ENCODE measurements at regions of chr7 and their contacts with region 1.

Region 1: DNA sequence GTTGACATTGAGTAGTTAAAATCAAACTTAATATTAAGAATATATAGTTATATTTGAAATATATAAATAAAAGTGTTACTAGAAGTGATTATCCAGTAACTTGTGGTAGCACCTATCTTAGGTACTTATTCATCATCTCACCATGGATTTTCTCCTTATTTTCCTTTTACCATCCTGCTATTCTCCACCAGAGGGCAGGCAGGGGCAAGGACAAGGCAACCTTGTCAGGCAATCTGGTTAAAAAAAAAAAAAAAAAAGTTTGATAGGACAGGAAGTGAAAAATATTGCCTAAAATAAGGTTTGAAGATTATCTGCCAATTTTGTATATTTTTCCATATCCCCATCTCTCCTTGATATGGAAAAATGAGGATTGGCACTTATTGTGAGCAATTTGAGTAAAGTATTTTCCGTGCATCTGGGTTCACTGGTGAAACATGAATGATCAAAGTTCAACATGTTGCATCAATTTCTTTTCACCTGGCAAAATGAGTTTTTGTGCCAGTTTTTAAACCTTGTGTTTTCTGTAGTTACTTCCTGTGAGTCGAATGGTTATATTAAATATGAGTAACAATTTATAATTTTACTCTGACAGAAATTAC is 256.7 kb downstream of the AGMO start:
- DNase-seq: peak; percentile 35
- ATAC-seq: no peak
- H3K4me3 Mint-ChIP-seq: no peak overlapping the region
- H3K27ac Mint-ChIP-seq: no peak overlapping the region
- H3K4me1 Mint-ChIP-seq: no peaks in the 10 kb centered on the region
- H3K27me3 Mint-ChIP-seq: no peaks in the 10 kb centered on the region
- CTCF ChIP-seq: peak; percentile 43

Region 2: GRCh38 chr7:16071246-16071857 is 766.3 kb after region 1 on chr7:
- CTCF ChIA-PET with region 1: no interaction called
- POLR2A ChIA-PET with region 1: no interaction called
- intact Hi-C with region 1: loop called (anchors 5 kb)
- DNase-seq: peak; percentile 8
- ATAC-seq: peak; percentile 45
- H3K4me3 Mint-ChIP-seq: no peak overlapping the region
- H3K27ac Mint-ChIP-seq: no peak overlapping the region
- H3K4me1 Mint-ChIP-seq: no peaks in the 10 kb centered on the region
- H3K27me3 Mint-ChIP-seq: no peaks in the 10 kb centered on the region
- CTCF ChIP-seq: peak; percentile 83